ENCODE measurements at regions of chr21 and their contacts with region 1.

Region 1: DNA sequence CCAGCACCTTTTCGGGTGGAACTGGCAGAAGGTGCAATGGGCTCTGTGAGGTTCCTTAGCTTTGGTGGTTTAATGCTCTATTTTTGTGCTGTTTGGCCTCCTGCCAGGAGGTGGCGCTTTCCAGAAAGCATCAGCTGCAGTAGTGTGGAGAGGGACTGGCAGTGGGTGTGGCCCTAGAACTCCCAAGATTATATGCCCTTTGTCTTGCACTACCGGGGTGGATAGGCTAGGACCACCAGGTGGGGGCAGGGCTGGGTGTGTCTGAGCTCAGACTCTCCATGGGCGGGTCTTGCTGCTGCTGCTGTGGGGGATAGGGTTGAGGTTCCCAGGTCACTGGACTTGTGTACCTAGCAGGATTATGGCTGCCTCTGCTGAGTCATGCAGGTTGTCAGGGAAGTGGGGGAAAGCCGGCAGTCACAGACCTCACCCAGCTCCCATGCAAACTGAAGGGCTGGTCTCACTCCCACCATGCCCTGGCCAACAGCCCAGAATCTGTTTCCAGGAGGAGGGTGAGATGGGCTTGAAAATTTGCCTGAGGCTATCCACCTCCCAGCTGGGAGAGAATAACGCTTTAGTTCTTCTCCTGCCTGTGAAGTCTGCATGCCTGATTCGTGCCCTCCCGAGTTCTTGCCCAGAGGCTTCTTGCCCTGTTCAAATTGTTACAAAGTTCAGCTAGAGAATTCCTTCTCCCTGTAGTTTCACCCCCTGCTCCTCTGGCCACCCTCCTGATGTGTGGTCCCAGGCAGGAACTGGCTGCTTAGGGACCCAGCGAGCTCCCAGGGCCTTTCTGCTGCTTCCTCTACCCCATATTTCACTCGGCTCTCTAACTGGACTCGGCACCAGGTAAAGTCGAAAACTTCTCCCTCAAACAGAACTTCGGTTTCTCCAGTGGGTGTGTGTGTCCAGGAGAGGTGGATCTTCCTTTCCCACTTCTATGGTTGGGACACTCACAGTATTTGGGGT is 76.5 kb upstream of the BTG3 start:
- DNase-seq: peak; percentile 71
- ATAC-seq: peak; percentile 36
- H3K4me3 Mint-ChIP-seq: no peak overlapping the region
- H3K27ac Mint-ChIP-seq: no peak overlapping the region
- H3K4me1 Mint-ChIP-seq: peaks cover 39% of the 10 kb centered on the region
- H3K27me3 Mint-ChIP-seq: no peaks in the 10 kb centered on the region

Region 2: GRCh38 chr21:17775431-17776126 is 86.4 kb after region 1 on chr21:
- CTCF ChIA-PET with region 1: interaction called, 14 read pairs
- DNase-seq: peak; percentile 84
- ATAC-seq: peak; percentile 85
- H3K4me3 Mint-ChIP-seq: peak overlapping the region; percentile 63
- H3K27ac Mint-ChIP-seq: peak overlapping the region; percentile 85
- H3K4me1 Mint-ChIP-seq: peaks cover 57% of the 10 kb centered on the region
- H3K27me3 Mint-ChIP-seq: no peaks in the 10 kb centered on the region

Region 3: GRCh38 chr21:17793246-17794123 is 104.3 kb after region 1 on chr21:
- CTCF ChIA-PET with region 1: interaction called, 11 read pairs
- DNase-seq: no peak
- ATAC-seq: peak; percentile 69
- H3K4me3 Mint-ChIP-seq: peak overlapping the region; percentile 74
- H3K27ac Mint-ChIP-seq: peak overlapping the region; percentile 95
- H3K4me1 Mint-ChIP-seq: peaks cover 66% of the 10 kb centered on the region
- H3K27me3 Mint-ChIP-seq: no peaks in the 10 kb centered on the region